GM12878 (cell line): ENCODE measurements at regions of chr19 and their contacts with region 1.

Region 1: GRCh38 chr19:13861732-13862531 is 15.0 kb upstream of the NANOS3 start:
- DNase-seq: peak; percentile 79
- ATAC-seq: peak; percentile 91
- H3K4me3 ChIP-seq: peak overlapping the region; percentile 74
- H3K27ac ChIP-seq: peak overlapping the region; percentile 99
- H3K4me1 ChIP-seq: peaks cover 8% of the 10 kb centered on the region
- H3K27me3 ChIP-seq: peaks cover 0 to 1% of the 10 kb centered on the region in 2 experiments; a peak in 2 of 4 replicates
- CTCF ChIP-seq: peak; percentile 87 to 98 (median 93)
- EP300 ChIP-seq: peak; percentile 48 to 56; a peak in 2 of 4 replicates
- POLR2A ChIP-seq: peak; percentile 87
- RAD21 ChIP-seq: peak; percentile 96

Region 2: DNA sequence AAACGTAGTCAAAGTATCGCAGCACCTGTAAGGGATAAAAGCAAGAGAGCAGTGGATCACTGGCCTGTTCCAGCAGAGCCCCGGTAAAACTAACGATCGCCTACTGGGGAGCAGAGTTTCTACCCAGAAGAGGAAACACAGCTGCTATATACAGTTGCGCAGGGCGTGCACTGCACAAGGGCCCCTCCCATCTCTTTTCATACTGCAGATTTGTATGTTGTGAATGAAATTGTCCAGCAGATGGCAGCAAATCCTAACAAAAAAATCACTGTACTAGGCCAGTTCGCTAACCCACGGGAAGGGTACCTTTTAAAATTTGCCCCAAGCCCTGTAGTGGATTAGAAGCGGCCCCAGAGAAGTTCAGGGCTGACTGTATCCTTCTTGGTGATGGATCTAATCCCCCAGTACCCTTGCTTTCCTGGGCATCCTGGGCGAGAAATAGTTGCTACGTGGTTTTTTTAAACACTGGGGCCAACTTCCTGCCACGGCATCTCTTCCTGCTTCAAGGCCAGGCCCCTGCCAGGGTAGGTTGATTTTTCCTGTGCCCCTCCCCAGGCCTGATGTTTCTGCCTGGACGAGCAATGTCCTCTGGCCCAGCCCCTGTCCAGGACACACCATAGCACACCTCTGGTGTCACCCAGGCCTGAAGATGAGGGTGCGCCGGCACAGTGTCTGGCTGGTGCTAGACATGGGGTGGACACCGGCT is 584.7 kb before region 1 on chr19:
- CTCF ChIA-PET with region 1: interaction called, 10 read pairs
- POLR2A ChIA-PET with region 1: no interaction called
- RAD21 ChIA-PET with region 1: interaction called, 6 read pairs
- SMC1A ChIA-PET with region 1: interaction called, 9 read pairs
- in situ Hi-C with region 1: loop called (anchors 5 kb)
- intact Hi-C with region 1: loop called (anchors 5 kb)
- DNase-seq: peak; percentile 71
- ATAC-seq: peak; percentile 96
- H3K4me3 ChIP-seq: no peak overlapping the region
- H3K27ac ChIP-seq: 0 out of 2 replicates have a peak overlapping the region, but pooled peaks have one; percentile 24
- H3K4me1 ChIP-seq: peaks cover 11% of the 10 kb centered on the region
- H3K27me3 ChIP-seq: no peaks in the 10 kb centered on the region
- CTCF ChIP-seq: peak; percentile 43 to 79 (median 67); a peak in 5 of 6 replicates
- EP300 ChIP-seq: no peak
- POLR2A ChIP-seq: no peak
- RAD21 ChIP-seq: peak; percentile 82

Region 3: DNA sequence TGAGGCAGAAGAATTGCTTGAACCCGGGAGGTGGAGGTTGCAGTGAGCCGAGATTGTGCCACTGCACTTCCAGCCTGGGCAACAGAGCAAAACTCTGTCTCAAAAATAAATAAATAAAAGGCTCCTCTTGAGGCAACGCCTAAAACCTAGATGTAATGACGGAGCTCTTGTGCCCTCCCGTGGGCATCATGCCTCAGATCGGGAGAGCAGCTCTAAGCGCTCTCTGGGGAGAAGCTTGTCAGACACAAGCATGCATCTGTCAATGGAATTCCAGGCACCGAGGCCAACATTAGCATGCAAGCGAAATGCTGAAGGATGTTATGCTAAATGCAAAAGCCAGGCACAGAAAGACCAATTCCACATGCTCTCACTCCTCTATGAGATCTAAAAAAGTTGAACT is 143.2 kb before region 1 on chr19:
- CTCF ChIA-PET with region 1: interaction called, 16 read pairs
- POLR2A ChIA-PET with region 1: no interaction called
- RAD21 ChIA-PET with region 1: interaction called, 16 read pairs
- SMC1A ChIA-PET with region 1: interaction called, 3 read pairs
- in situ Hi-C with region 1: no loop called
- intact Hi-C with region 1: loop called (anchors 5 kb)
- DNase-seq: no peak
- ATAC-seq: no peak
- H3K4me3 ChIP-seq: no peak overlapping the region
- H3K27ac ChIP-seq: no peak overlapping the region
- H3K4me1 ChIP-seq: no peaks in the 10 kb centered on the region
- H3K27me3 ChIP-seq: no peaks in the 10 kb centered on the region
- CTCF ChIP-seq: no peak
- EP300 ChIP-seq: no peak
- POLR2A ChIP-seq: no peak
- RAD21 ChIP-seq: peak; percentile 23; the same call in 1 of the 2 replicates

Region 4: GRCh38 chr19:13741893-13742292 is 120.0 kb before region 1 on chr19:
- CTCF ChIA-PET with region 1: no interaction called
- POLR2A ChIA-PET with region 1: no interaction called
- RAD21 ChIA-PET with region 1: no interaction called
- SMC1A ChIA-PET with region 1: no interaction called
- in situ Hi-C with region 1: no loop called
- intact Hi-C with region 1: no loop called
- DNase-seq: no peak
- ATAC-seq: no peak
- H3K4me3 ChIP-seq: no peak overlapping the region
- H3K27ac ChIP-seq: no peak overlapping the region
- H3K4me1 ChIP-seq: no peaks in the 10 kb centered on the region
- H3K27me3 ChIP-seq: no peaks in the 10 kb centered on the region
- CTCF ChIP-seq: no peak
- EP300 ChIP-seq: no peak
- POLR2A ChIP-seq: no peak
- RAD21 ChIP-seq: no peak

Region 5: GRCh38 chr19:13774217-13775191 is 87.4 kb before region 1 on chr19 and contains the start of gene C19orf53:
- CTCF ChIA-PET with region 1: interaction called, 14 read pairs
- POLR2A ChIA-PET with region 1: interaction called, 8 read pairs
- RAD21 ChIA-PET with region 1: interaction called, 21 read pairs
- SMC1A ChIA-PET with region 1: interaction called, 21 read pairs
- in situ Hi-C with region 1: no loop called
- intact Hi-C with region 1: no loop called
- DNase-seq: peak; percentile 83
- ATAC-seq: peak; percentile 100
- H3K4me3 ChIP-seq: peak within 1 kb of the TSS; percentile 95
- H3K27ac ChIP-seq: peak within 1 kb of the TSS; percentile 77
- H3K4me1 ChIP-seq: peaks cover 3% of the 10 kb centered on the region
- H3K27me3 ChIP-seq: no peaks in the 10 kb centered on the region
- CTCF ChIP-seq: no peak
- EP300 ChIP-seq: no peak
- POLR2A ChIP-seq: peak; percentile 99
- RAD21 ChIP-seq: no peak
- polyA plus RNA-seq, gene C19orf53: 392 to 449 TPM

Region 6: GRCh38 chr19:13833330-13834243 is 28.3 kb before region 1 on chr19:
- CTCF ChIA-PET with region 1: interaction called, 51 read pairs
- POLR2A ChIA-PET with region 1: interaction called, 85 read pairs
- RAD21 ChIA-PET with region 1: interaction called, 68 read pairs
- SMC1A ChIA-PET with region 1: interaction called, 37 read pairs
- in situ Hi-C with region 1: no loop called
- intact Hi-C with region 1: no loop called
- DNase-seq: no peak
- ATAC-seq: peak; percentile 90
- H3K4me3 ChIP-seq: peak overlapping the region; percentile 63; the same call in 1 of the 2 replicates
- H3K27ac ChIP-seq: peak overlapping the region; percentile 52
- H3K4me1 ChIP-seq: peaks cover 32% of the 10 kb centered on the region
- H3K27me3 ChIP-seq: no peaks in the 10 kb centered on the region
- CTCF ChIP-seq: peak; percentile 53 to 70 (median 60)
- EP300 ChIP-seq: no peak
- POLR2A ChIP-seq: peak; percentile 69
- RAD21 ChIP-seq: peak; percentile 32; the same call in 1 of the 2 replicates

Region 7: GRCh38 chr19:13872695-13873389 is 10.9 kb after region 1 on chr19:
- CTCF ChIA-PET with region 1: interaction called, 13 read pairs
- POLR2A ChIA-PET with region 1: interaction called, 3 read pairs
- RAD21 ChIA-PET with region 1: interaction called, 13 read pairs
- SMC1A ChIA-PET with region 1: interaction called, 7 read pairs
- in situ Hi-C with region 1: no loop called
- intact Hi-C with region 1: no loop called
- DNase-seq: no peak
- ATAC-seq: peak; percentile 78
- H3K4me3 ChIP-seq: peak overlapping the region; percentile 47
- H3K27ac ChIP-seq: no peak overlapping the region
- H3K4me1 ChIP-seq: no peaks in the 10 kb centered on the region
- H3K27me3 ChIP-seq: no peaks in the 10 kb centered on the region
- CTCF ChIP-seq: peak; percentile 6 to 24 (median 11); a peak in 2 of 6 replicates
- EP300 ChIP-seq: no peak
- POLR2A ChIP-seq: no peak
- RAD21 ChIP-seq: no peak

Region 8: GRCh38 chr19:13952154-13953035 is 90.5 kb after region 1 on chr19 and contains the start of gene DCAF15:
- CTCF ChIA-PET with region 1: no interaction called
- POLR2A ChIA-PET with region 1: no interaction called
- RAD21 ChIA-PET with region 1: no interaction called
- SMC1A ChIA-PET with region 1: no interaction called
- in situ Hi-C with region 1: no loop called
- intact Hi-C with region 1: no loop called
- DNase-seq: peak; percentile 99
- ATAC-seq: peak; percentile 99
- H3K4me3 ChIP-seq: peak within 1 kb of the TSS; percentile 100
- H3K27ac ChIP-seq: peak within 1 kb of the TSS; percentile 82
- H3K4me1 ChIP-seq: peaks cover 11% of the 10 kb centered on the region
- H3K27me3 ChIP-seq: no peaks in the 10 kb centered on the region
- CTCF ChIP-seq: no peak
- EP300 ChIP-seq: no peak
- POLR2A ChIP-seq: peak; percentile 87
- RAD21 ChIP-seq: no peak
- polyA plus RNA-seq, gene DCAF15: 0.16 to 0.58 TPM